ENCODE measurements at regions of chr22 and their contacts with region 1.

Region 1: GRCh38 chr22:20418211-20418788 is 19.3 kb downstream of the SCARF2 start:
- DNase-seq: peak in 1 of 2 experiments; percentile 50
- H3K4me3 ChIP-seq: peak overlapping the region; percentile 46; the same call in 1 of the 2 replicates
- H3K27ac ChIP-seq: no peak overlapping the region
- H3K4me1 ChIP-seq: no peaks in the 10 kb centered on the region
- H3K27me3 ChIP-seq: no peaks in the 10 kb centered on the region
- CTCF ChIP-seq: peak; percentile 83

Region 2: DNA sequence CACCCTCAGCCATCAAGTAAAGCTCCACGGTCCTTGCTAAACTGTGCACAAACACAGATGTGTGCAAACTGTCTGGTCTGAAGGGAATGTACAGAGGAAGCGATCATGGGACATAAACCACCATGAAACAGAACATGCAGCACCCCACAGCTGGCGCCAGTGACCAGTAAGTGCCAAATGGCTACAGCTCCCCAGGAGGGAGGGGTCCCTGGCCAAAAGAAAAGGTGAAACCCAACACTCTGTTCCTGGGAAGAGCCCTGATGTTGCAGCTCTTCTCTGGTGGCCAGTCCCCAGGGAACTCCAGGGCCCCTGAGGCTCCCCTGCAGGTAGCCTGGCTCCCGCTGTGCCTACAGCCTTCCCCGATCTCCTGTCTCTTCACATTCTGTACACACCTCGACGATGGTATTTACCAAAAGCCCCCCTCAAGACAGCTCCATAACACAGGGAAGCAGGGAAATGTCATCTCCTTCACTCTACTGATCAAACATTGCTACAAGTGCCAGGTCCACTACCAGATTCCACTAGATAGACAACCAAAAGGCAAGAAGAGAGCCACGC is 101.4 kb before region 1 on chr22:
- CTCF ChIA-PET with region 1: interaction called, 10 read pairs
- POLR2A ChIA-PET with region 1: no interaction called
- intact Hi-C with region 1: no loop called
- DNase-seq: no peak
- H3K4me3 ChIP-seq: no peak overlapping the region
- H3K27ac ChIP-seq: no peak overlapping the region
- H3K4me1 ChIP-seq: peaks cover 3% of the 10 kb centered on the region; the same call in 1 of the 2 replicates
- H3K27me3 ChIP-seq: no peaks in the 10 kb centered on the region
- CTCF ChIP-seq: no peak

Region 3: GRCh38 chr22:20456064-20456721 is 37.9 kb after region 1 on chr22:
- CTCF ChIA-PET with region 1: interaction called, 21 read pairs
- POLR2A ChIA-PET with region 1: no interaction called
- intact Hi-C with region 1: no loop called
- DNase-seq: peak; percentile 38 to 41
- H3K4me3 ChIP-seq: no peak overlapping the region
- H3K27ac ChIP-seq: no peak overlapping the region
- H3K4me1 ChIP-seq: no peaks in the 10 kb centered on the region
- H3K27me3 ChIP-seq: no peaks in the 10 kb centered on the region
- CTCF ChIP-seq: peak; percentile 74

Region 4: DNA sequence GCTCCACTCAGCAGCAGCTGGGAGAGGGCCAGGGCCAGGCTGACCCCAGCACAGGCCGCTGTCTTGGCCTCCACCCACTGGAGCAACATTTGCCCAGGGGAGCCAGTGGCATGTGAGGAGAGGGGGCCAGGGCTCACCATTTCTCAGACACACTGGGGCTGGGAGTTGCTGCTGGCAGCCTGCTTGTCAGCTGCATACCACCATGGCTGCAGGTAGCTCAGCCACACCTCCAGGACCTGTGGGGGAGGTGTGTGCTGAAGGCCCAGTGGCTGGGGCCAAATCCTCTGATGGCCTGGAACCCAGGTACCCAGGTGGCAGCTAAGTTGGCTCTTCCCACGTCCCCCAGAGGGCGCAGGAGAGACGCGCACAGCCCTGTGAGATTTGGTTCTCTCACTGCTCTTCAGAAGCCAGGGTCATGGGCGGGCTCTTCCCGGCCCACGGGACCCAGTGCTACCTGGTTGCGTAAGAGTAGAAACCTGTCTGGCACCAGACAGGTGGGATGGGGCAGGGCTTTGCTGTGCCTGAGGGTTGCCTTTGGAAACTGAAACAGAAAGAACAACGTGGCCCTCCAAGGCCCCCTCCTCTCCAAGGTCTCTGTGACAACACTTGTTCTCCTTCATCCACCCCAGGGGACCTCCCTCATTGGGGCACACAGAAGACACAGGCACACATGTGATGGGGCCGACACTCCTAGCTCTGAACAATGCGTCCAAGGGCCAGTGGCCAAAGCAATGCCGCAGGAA is 187.9 kb after region 1 on chr22:
- CTCF ChIA-PET with region 1: no interaction called
- POLR2A ChIA-PET with region 1: no interaction called
- intact Hi-C with region 1: loop called (anchors 2 kb)
- DNase-seq: peak; percentile 74 to 79
- H3K4me3 ChIP-seq: no peak overlapping the region
- H3K27ac ChIP-seq: no peak overlapping the region
- H3K4me1 ChIP-seq: no peaks in the 10 kb centered on the region
- H3K27me3 ChIP-seq: no peaks in the 10 kb centered on the region
- CTCF ChIP-seq: peak; percentile 73

Measured in PC-9 (cell line).